CD4-positive, alpha-beta T cell (primary cell): ENCODE measurements at regions of chr7 and their contacts with region 1.

Region 1: GRCh38 chr7:92944633-92945032 is 108.3 kb upstream of the CDK6 start:
- DNase-seq: no peak
- ATAC-seq: no peak
- H3K4me3 ChIP-seq: no peak overlapping the region
- H3K4me3 Mint-ChIP-seq: no peak overlapping the region
- H3K27ac ChIP-seq: no peak overlapping the region
- H3K27ac Mint-ChIP-seq: no peak overlapping the region
- H3K4me1 ChIP-seq: no peaks in the 10 kb centered on the region
- H3K4me1 Mint-ChIP-seq: no peaks in the 10 kb centered on the region
- H3K27me3 ChIP-seq: no peaks in the 10 kb centered on the region
- H3K27me3 Mint-ChIP-seq: no peaks in the 10 kb centered on the region
- CTCF ChIP-seq: no peak

Region 2: DNA sequence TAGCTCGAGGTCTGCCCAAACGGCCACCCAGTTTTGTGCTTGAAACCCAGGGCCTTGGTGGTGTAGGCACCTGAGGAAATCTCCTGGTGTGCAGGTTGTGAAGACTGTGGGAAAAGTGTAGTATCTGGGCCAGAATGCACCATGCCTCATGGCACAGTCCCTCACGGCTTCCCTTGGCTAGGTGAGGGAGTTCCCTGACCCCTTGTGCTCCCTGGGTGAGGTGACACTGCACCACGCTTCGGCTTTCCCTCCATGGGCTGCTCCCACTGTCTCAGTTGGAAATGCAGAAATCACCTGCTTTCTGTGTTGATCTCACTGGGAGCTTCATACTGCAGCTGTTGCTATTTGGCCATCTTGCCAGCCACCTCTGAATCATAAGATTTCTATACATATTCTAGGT is 45.8 kb before region 1 on chr7:
- CTCF ChIA-PET with region 1: no interaction called
- POLR2A ChIA-PET with region 1: no interaction called
- intact Hi-C with region 1: loop called in 1 of 2 experiments (anchors 5 kb)
- DNase-seq: no peak
- ATAC-seq: no peak
- H3K4me3 ChIP-seq: no peak overlapping the region
- H3K4me3 Mint-ChIP-seq: no peak overlapping the region
- H3K27ac ChIP-seq: no peak overlapping the region
- H3K27ac Mint-ChIP-seq: no peak overlapping the region
- H3K4me1 ChIP-seq: no peaks in the 10 kb centered on the region
- H3K4me1 Mint-ChIP-seq: peaks cover 4% of the 10 kb centered on the region
- H3K27me3 ChIP-seq: no peaks in the 10 kb centered on the region
- H3K27me3 Mint-ChIP-seq: peaks cover 13% of the 10 kb centered on the region
- CTCF ChIP-seq: no peak

Region 3: DNA sequence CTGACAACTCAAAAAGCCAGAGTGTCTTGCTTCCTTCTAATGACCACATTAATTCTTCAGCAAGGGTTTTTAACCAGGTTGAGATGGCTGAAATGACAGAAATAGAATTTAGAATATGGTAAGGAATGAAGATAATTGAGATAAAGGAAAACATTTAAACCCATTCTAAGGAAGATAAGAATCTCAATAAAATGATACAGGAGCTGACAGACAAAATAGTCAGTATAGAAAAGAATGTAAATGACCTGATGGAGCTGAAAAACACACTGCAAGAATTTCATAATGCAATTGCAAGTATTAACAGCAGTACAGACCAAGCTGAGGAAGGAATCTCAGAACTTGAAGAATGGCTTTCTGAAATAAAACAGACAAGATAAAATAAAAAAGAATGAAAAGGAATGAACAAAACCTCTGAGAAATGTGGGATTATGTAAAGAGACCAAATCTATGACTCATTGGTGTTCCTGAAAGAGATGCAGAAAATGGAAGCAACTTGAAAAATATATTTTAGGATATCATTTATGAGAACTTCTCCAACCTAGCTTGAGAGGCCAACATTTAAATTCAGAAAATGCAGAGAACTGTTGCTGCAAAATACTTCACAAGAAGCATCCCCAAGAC is 86.1 kb after region 1 on chr7:
- CTCF ChIA-PET with region 1: no interaction called
- POLR2A ChIA-PET with region 1: no interaction called
- intact Hi-C with region 1: no loop called
- DNase-seq: no peak
- ATAC-seq: no peak
- H3K4me3 ChIP-seq: no peak overlapping the region
- H3K4me3 Mint-ChIP-seq: no peak overlapping the region
- H3K27ac ChIP-seq: no peak overlapping the region
- H3K27ac Mint-ChIP-seq: no peak overlapping the region
- H3K4me1 ChIP-seq: no peaks in the 10 kb centered on the region
- H3K4me1 Mint-ChIP-seq: no peaks in the 10 kb centered on the region
- H3K27me3 ChIP-seq: peaks cover 0 to 4% of the 10 kb centered on the region in 2 experiments
- H3K27me3 Mint-ChIP-seq: peaks cover 8% of the 10 kb centered on the region
- CTCF ChIP-seq: no peak

Region 4: DNA sequence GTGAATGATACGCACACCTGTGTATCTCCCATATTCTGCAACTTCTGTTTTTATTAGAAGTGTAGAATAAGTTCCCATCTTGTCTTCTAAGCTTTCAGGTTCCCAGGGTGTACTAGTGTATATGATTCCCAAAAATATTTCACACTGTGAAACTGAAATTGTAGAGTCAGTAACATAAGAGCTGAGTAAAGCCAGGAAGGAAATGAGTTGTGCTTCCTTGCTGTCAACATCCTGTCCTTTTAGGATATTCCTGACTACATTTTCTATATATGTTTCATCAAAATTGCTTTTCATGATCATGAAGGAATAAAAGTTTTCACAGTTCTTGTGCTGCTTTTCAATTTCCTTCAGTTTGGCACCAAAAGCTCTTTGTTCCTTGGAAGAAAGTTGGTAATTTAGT is 188.4 kb after region 1 on chr7:
- CTCF ChIA-PET with region 1: no interaction called
- POLR2A ChIA-PET with region 1: no interaction called
- intact Hi-C with region 1: no loop called
- DNase-seq: no peak
- ATAC-seq: no peak
- H3K4me3 ChIP-seq: no peak overlapping the region
- H3K4me3 Mint-ChIP-seq: no peak overlapping the region
- H3K27ac ChIP-seq: no peak overlapping the region
- H3K27ac Mint-ChIP-seq: no peak overlapping the region
- H3K4me1 ChIP-seq: no peaks in the 10 kb centered on the region
- H3K4me1 Mint-ChIP-seq: no peaks in the 10 kb centered on the region
- H3K27me3 ChIP-seq: no peaks in the 10 kb centered on the region
- H3K27me3 Mint-ChIP-seq: no peaks in the 10 kb centered on the region
- CTCF ChIP-seq: no peak